Dorsolateral prefrontal cortex (tissue), 120 donors: ENCODE measurements at regions of chr18 and their contacts with region 1.

Region 1: GRCh38 chr18:1982056-1982455 is 589.2 kb downstream of the METTL4 start:
- DNase-seq: no peak
- H3K4me3 ChIP-seq: no peak overlapping the region
- H3K27ac ChIP-seq: no peak overlapping the region
- H3K27me3 ChIP-seq: peaks cover 0 to 11% (median 0%) of the 10 kb centered on the region in 45 donors
- CTCF ChIP-seq: no peak

Region 2: DNA sequence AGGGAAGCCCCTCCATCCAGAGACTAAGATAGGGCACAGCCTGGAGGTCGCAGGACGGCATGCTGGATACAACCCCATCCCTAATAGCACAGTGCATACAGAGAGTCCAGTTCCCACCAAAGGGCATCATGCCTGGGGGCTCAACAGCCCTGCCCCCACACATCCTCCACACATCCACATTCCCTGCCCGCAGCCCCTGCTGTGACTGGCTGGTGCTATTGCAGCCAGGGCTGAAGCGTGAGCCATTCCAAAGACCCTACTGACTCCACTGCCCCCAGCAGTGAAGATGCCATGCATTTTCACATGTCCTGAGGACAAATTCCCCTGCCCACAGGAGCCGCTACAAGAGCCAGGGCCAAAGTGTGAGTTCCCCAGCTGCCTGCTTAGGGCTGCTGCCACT is 52.3 kb before region 1 on chr18:
- intact Hi-C with region 1: loop called in 1 of 2 experiments (anchors 10 kb)
- DNase-seq: no peak
- H3K4me3 ChIP-seq: no peak overlapping the region
- H3K27ac ChIP-seq: no peak overlapping the region
- H3K27me3 ChIP-seq: no peaks in the 10 kb centered on the region
- CTCF ChIP-seq: no peak

Region 3: DNA sequence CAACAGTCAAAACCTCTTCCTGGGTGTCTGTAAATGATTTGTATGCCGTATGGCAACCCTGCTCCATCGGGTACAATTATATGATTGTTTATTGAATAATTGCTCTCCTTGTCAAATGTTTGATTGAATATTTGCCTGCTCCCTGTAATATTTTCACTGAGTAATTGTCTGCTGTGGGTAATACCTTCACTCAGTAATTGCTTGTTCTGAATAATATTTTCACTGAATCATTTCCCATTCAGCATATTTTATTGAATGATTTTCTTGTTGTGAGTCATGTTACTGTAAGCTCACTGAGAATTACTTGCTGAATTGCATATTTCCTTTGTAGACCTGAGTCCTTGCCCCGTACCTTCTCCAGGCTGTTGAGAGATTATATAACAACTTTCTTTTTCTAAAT is 54.0 kb after region 1 on chr18:
- intact Hi-C with region 1: no loop called
- DNase-seq: no peak
- H3K4me3 ChIP-seq: no peak overlapping the region
- H3K27ac ChIP-seq: no peak overlapping the region
- H3K27me3 ChIP-seq: no peaks in the 10 kb centered on the region
- CTCF ChIP-seq: no peak